SK-N-SH (cell line): ENCODE measurements at regions of chr18 and their contacts with region 1.

Region 1: DNA sequence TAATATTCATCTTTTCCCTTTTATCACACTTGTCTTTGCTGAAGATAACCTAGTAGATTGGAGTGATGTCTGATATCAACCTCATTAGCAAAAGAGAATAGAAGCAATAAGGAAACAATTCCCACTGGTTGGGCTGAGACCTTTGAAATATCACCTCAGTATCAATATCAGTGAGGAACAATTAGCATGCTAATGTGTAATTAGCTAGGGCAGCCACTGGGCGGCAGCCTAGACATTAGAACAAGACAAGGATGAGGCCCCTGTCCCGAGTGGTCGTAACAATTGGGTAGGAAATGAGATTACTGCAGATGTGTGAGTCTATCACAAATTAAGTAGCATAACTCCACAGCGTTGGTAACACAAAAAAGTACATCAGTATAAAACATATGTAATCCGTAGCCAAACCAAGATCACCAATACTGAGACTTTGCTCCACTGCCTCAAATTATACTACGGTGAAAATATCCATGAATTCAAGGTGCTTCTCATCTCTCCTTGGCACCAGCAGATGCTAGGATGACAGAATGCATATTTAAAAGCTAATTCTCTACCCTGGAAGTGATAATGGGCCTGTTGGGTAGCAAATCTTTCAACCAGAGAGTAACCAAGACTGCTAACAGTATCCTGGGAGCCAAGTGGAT is 99.1 kb downstream of the ALPK2 start:
- DNase-seq: peak; percentile 67
- H3K4me3 ChIP-seq: peak overlapping the region in 1 of 2 experiments; percentile 7; a peak in 1 of 4 replicates
- H3K27ac ChIP-seq: no peak overlapping the region
- H3K4me1 ChIP-seq: no peaks in the 10 kb centered on the region; a peak in 1 of 4 replicates
- H3K27me3 ChIP-seq: no peaks in the 10 kb centered on the region
- CTCF ChIP-seq: peak; percentile 92
- EP300 ChIP-seq: no peak
- RAD21 ChIP-seq: peak; percentile 90

Region 2: GRCh38 chr18:57910817-57911216 is 619.0 kb before region 1 on chr18:
- CTCF ChIA-PET with region 1: no interaction called
- POLR2A ChIA-PET with region 1: no interaction called
- DNase-seq: no peak
- H3K4me3 ChIP-seq: no peak overlapping the region
- H3K27ac ChIP-seq: no peak overlapping the region
- H3K4me1 ChIP-seq: peaks cover 4% of the 10 kb centered on the region in 2 experiments; a peak in 3 of 4 replicates
- H3K27me3 ChIP-seq: no peaks in the 10 kb centered on the region
- CTCF ChIP-seq: peak; percentile 39
- EP300 ChIP-seq: no peak
- RAD21 ChIP-seq: no peak

Region 3: DNA sequence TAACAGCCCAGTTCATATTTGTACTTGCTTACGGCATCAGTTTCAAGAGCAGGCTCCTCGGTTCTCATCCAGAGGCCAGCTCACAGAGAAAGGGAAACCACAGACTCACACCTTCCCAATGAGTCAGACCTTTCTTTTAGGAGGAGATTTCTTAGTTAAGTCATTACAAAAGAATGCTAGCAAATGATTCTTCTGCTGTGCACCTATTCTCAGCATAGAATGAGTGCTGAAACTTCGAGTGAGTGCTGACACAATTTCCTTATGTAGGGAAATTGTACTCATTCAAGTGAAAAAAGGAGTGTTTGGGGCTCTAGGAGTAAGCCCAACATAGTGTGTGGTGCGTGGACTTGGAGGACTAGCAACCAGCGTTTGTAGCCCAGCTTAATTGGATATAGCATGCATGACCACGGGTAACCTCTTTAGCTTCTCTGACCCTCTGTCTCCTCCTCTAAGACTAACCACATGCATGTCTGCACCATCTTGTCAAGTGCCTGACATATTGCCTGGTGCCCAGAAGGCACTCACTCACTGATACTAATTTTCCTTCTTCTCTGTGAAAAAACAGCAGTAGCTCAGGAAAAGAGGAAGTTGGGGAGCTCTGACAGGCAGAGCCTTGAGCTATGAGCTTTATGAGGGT is 12.1 kb after region 1 on chr18:
- CTCF ChIA-PET with region 1: interaction called, 12 read pairs
- POLR2A ChIA-PET with region 1: no interaction called
- DNase-seq: no peak
- H3K4me3 ChIP-seq: no peak overlapping the region
- H3K27ac ChIP-seq: peak overlapping the region; percentile 28 to 87; a peak in 3 of 4 replicates
- H3K4me1 ChIP-seq: peaks cover 0 to 7% of the 10 kb centered on the region in 2 experiments; a peak in 2 of 4 replicates
- H3K27me3 ChIP-seq: no peaks in the 10 kb centered on the region
- CTCF ChIP-seq: no peak
- EP300 ChIP-seq: peak in 1 of 2 experiments; percentile 37; a peak in 1 of 4 replicates
- RAD21 ChIP-seq: no peak

Region 4: GRCh38 chr18:58584200-58585127 is 54.6 kb after region 1 on chr18:
- CTCF ChIA-PET with region 1: no interaction called
- POLR2A ChIA-PET with region 1: no interaction called
- DNase-seq: no peak
- H3K4me3 ChIP-seq: peak overlapping the region in 1 of 2 experiments; percentile 35; a peak in 1 of 4 replicates
- H3K27ac ChIP-seq: peak overlapping the region; percentile 76 to 88
- H3K4me1 ChIP-seq: peaks cover 8 to 35% of the 10 kb centered on the region in 2 experiments; a peak in 3 of 4 replicates
- H3K27me3 ChIP-seq: no peaks in the 10 kb centered on the region
- CTCF ChIP-seq: no peak
- EP300 ChIP-seq: peak in 1 of 2 experiments; percentile 68; a peak in 1 of 4 replicates
- RAD21 ChIP-seq: no peak

Region 5: GRCh38 chr18:58754544-58755068 is 224.8 kb after region 1 on chr18:
- CTCF ChIA-PET with region 1: interaction called, 162 read pairs
- POLR2A ChIA-PET with region 1: no interaction called
- DNase-seq: no peak
- H3K4me3 ChIP-seq: no peak overlapping the region
- H3K27ac ChIP-seq: no peak overlapping the region
- H3K4me1 ChIP-seq: no peaks in the 10 kb centered on the region; a peak in 1 of 4 replicates
- H3K27me3 ChIP-seq: no peaks in the 10 kb centered on the region
- CTCF ChIP-seq: no peak
- EP300 ChIP-seq: no peak
- RAD21 ChIP-seq: no peak